ENCODE measurements at regions of chr13 and their contacts with region 1.

Region 1: GRCh38 chr13:23889615-23890607 is 711 bp upstream of the MIPEP start:
- DNase-seq: no peak
- ATAC-seq: peak; percentile 26

Region 2: GRCh38 chr13:23547000-23547590 is 342.8 kb before region 1 on chr13:
- intact Hi-C with region 1: no loop called
- DNase-seq: peak in 1 of 2 donors; percentile 5
- ATAC-seq: no peak

Region 3: GRCh38 chr13:23588642-23589041 is 301.3 kb before region 1 on chr13:
- intact Hi-C with region 1: no loop called
- DNase-seq: no peak
- ATAC-seq: no peak

Region 4: DNA sequence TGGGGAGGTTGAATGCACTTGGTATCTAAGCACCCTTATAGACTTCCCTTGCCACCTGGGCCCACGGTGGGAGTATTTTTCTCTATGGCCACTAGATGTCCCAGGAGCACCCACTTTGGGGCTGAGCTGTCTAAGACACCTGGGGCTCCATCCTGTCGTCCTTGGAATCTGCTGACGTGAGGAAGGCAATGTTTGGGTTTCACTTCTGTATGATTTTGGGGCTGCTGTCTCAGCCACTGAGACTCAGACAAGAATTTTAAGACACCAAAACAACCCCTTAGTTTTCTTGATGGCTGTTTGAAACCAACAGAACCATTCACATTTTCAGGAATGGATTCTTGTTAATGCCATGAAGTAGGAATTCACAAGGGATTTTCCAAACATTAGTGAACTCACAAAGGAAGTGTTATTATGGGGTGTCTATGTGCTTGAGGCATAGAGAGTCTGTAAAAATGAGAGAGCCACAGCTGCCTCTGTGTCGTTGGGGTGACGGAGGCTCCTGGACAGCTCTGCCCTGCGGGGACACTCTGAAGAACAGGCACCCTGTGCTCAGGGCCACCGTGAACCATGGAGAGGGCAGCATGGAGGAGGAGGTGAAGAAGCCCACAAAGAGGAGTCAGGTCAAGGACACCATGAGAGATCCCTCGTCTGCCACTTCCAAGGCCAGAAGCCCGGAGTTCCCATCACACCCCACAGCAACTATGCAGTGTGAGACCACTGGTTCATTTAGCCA is 163.8 kb after region 1 on chr13:
- intact Hi-C with region 1: no loop called
- DNase-seq: peak; percentile 60 to 61
- ATAC-seq: peak; percentile 97

Region 5: GRCh38 chr13:24323036-24323738 is 433.3 kb after region 1 on chr13:
- intact Hi-C with region 1: loop called in 1 of 2 experiments (anchors 5 kb)
- DNase-seq: peak; percentile 33 to 36
- ATAC-seq: peak; percentile 54